Heart left ventricle (tissue), 16 donors: ENCODE measurements at regions of chr17 and their contacts with region 1.

Region 1: DNA sequence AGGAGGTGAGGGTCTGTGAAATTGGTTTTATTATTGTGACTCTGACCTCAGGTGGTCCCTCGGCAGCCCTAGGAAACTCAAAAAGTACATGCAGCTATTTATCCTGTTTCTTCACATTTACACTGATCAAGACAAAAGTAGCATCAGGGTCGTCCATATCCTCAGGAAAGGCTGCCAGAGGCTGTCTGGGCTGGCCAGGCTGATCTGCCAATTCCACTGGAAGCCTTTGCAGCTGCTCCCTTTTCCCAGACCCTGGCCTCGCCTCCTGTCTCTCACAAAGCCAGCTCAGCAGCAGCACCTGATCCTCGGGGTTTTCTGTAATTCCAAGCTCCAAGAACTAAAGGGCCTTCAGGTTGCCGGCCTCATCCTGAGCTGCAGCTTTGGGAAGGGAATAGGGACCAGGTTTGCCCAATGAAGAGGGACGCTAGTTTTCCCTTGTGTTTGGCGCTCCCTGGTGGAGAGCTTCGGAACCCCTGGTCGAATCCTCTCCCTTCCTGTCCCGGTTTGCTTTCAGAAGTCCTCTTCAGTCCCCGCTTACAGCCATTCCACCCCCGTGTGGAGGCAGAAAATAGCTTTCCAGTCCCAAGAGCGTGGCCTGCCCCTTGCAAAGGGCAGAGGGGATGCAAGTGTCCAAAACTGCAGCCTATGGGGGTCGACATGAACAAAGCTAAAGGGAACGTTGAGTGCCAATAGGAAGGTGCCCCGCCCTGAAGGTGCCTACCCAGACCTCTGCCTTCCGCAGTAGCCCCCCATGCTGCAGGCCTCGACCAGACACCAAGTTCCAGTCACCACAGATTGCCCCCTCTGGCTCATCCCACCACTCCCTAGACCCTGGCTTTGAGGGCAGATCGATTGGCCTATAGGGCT is 13.4 kb downstream of the MFSD6L start:
- DNase-seq: peak; percentile 68 to 83 (median 76)
- ATAC-seq: peak in 3 of 4 donors; percentile 91 to 92 (median 91)
- H3K4me3 ChIP-seq: no peak overlapping the region
- H3K27ac ChIP-seq: no peak overlapping the region
- H3K4me1 ChIP-seq: peaks cover 0 to 20% (median 0%) of the 10 kb centered on the region in 12 donors
- H3K27me3 ChIP-seq: no peaks in the 10 kb centered on the region
- CTCF ChIP-seq: peak; percentile 72 to 91 (median 88)
- POLR2A ChIP-seq: no peak

Region 2: GRCh38 chr17:8753976-8754440 is 31.8 kb before region 1 on chr17:
- intact Hi-C with region 1: loop called in 1 of 10 experiments (anchors 5 kb)
- DNase-seq: no peak
- ATAC-seq: no peak
- H3K4me3 ChIP-seq: no peak overlapping the region
- H3K27ac ChIP-seq: no peak overlapping the region
- H3K4me1 ChIP-seq: no peaks in the 10 kb centered on the region
- H3K27me3 ChIP-seq: no peaks in the 10 kb centered on the region
- CTCF ChIP-seq: peak in 6 of 12 donors; percentile 6 to 29 (median 22)
- POLR2A ChIP-seq: no peak

Region 3: DNA sequence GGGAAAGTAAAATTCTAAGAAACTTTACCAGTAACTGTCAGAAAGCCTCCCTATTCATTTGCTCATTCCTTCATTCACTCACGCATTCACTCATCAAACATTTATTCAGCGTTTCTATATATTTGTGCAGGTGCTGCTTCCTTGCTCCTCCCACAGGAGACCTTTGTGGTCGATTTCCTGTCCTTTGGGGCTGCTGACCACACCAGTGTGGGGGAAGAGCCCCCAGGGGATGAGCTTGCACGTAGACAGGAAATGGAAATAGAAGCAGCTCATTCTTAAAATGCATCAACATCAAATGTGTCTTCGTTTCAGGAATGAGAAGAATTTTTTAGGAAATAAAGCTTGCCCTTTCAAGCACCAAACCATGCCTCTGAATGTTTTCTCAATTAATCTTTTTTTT is 72.1 kb after region 1 on chr17:
- intact Hi-C with region 1: no loop called
- DNase-seq: peak in 4 of 5 donors; percentile 47 to 69 (median 64)
- ATAC-seq: peak in 3 of 4 donors; percentile 48 to 92 (median 51)
- H3K4me3 ChIP-seq: peak overlapping the region in 5 of 12 donors; percentile 1 to 15 (median 11)
- H3K27ac ChIP-seq: peak overlapping the region in 9 of 12 donors; percentile 18 to 77 (median 62)
- H3K4me1 ChIP-seq: peaks cover 4 to 56% (median 20%) of the 10 kb centered on the region in 12 donors
- H3K27me3 ChIP-seq: no peaks in the 10 kb centered on the region
- CTCF ChIP-seq: no peak
- POLR2A ChIP-seq: no peak